Naive thymus-derived CD8-positive, alpha-beta T cell (primary cell): ENCODE measurements at regions of chr1 and their contacts with region 1.

Region 1: DNA sequence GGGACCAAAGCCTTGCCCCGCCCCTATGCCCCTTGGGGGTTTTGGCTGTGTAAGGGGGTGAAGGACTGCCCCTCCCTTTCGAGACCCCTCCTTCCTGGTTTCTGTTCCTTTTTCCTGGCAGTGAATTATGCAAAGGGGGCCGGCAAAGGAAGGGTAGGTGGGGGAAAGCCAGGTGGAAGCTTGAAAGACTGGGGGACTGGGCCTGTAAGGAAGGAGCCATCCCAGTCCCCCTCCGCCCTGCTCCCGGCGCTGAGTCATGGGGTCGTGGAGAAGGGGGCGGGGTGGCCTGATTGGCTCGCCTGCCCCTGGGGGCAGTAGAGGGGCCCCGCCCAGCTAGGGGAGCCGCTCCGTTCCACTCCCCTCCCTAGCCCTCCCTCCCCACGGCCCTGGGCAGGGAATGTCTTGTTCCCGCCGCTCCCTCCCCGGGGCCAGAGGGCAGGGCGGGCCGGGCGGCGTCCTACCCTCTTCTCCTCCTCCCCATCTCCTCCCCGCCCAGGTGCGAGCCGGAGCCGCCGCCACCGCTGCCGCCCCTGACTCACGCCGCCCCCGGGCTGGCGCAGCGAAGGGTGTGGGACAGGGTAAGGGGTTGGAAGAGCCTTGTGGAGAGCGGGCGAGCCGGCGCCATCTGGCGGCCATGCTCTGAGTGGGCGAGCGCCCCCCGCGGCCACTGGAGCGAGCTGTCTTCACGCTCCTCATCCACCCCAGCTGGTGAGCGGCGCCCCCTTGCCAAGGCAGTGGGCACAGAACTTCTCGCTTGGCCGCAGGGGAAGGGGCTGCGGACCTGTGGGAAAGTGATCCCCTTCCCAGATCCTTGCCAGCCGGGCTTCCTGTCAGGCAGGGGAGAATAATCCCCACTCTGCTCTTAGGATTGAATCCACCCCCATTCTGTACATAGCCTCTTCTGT is 14.7 kb downstream of the ZBTB7B start:
- DNase-seq: peak; percentile 78 to 91 (median 86)
- ATAC-seq: peak; percentile 98
- H3K4me3 Mint-ChIP-seq: peak overlapping the region; percentile 52 to 78 (median 69)
- H3K27ac Mint-ChIP-seq: peak overlapping the region in 5 of 10 donors; percentile 29 to 80 (median 67)
- H3K4me1 Mint-ChIP-seq: peaks cover 26 to 56% (median 51%) of the 10 kb centered on the region in 4 donors
- H3K27me3 Mint-ChIP-seq: peaks cover 0 to 17% (median 0%) of the 10 kb centered on the region in 5 donors

Region 2: GRCh38 chr1:154747740-154748404 is 269.4 kb before region 1 on chr1:
- POLR2A ChIA-PET with region 1: no interaction called
- DNase-seq: peak in 8 of 10 donors; percentile 23 to 57 (median 36)
- ATAC-seq: peak; percentile 90 to 96
- H3K4me3 Mint-ChIP-seq: peak overlapping the region; percentile 61 to 85 (median 76)
- H3K27ac Mint-ChIP-seq: peak overlapping the region; percentile 71 to 94 (median 88)
- H3K4me1 Mint-ChIP-seq: peaks cover 33 to 49% (median 45%) of the 10 kb centered on the region in 4 donors
- H3K27me3 Mint-ChIP-seq: no peaks in the 10 kb centered on the region

Region 3: DNA sequence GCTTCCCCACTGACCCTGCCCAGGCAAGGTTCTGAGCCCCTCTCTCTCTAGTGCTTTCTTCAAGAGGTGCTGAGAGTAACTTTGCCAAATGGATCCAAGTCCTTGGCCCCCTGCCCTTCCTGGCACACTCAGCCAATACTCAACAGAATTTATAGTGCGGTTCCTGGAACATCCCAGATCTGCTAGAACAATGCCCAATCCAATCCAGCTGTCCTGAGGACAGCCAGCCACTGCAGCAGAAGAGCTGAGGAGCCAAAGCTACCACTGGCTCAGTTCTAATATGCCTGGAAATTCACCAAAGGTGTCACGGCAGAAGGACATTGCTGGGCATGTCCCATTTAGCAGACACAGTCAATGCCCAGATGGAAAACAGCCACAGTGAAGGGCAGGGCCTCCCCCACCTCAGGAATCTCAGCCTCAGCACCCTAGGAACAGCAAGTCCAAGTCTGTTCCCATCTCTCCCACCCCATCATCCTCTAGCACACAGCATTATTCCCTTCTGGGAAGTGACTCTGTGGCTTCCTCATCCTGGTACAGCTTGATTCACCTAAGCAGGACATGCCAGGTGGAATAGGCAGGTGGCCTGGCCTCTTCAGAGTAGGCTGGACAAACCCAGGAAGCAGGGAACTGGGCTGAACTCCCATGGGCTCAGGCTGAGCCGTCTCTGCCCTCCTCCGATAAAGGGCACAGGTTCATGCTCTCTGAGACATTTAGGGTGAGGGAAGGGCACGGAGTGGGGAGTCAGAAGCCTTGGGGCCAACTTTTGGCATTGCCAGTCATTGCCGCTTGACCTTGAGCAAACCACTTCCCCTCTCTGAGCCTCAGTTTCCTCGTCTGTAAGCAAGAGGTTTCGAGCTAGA is 105.4 kb before region 1 on chr1:
- POLR2A ChIA-PET with region 1: no interaction called
- DNase-seq: no peak
- ATAC-seq: no peak
- H3K4me3 Mint-ChIP-seq: no peak overlapping the region
- H3K27ac Mint-ChIP-seq: peak overlapping the region in 1 of 10 donors; percentile 12
- H3K4me1 Mint-ChIP-seq: peaks cover 0 to 2% (median 0%) of the 10 kb centered on the region in 4 donors
- H3K27me3 Mint-ChIP-seq: peaks cover 0 to 3% (median 1%) of the 10 kb centered on the region in 5 donors

Region 4: GRCh38 chr1:154925335-154926170 is 91.7 kb before region 1 on chr1:
- POLR2A ChIA-PET with region 1: no interaction called
- DNase-seq: no peak
- ATAC-seq: no peak
- H3K4me3 Mint-ChIP-seq: no peak overlapping the region
- H3K27ac Mint-ChIP-seq: peak overlapping the region in 3 of 10 donors; percentile 52 to 88 (median 62)
- H3K4me1 Mint-ChIP-seq: peaks cover 2 to 15% (median 13%) of the 10 kb centered on the region in 4 donors
- H3K27me3 Mint-ChIP-seq: no peaks in the 10 kb centered on the region

Region 5: GRCh38 chr1:154936555-154937084 is 80.7 kb before region 1 on chr1 and contains the start of gene PMVK:
- POLR2A ChIA-PET with region 1: interaction called, 15 read pairs
- DNase-seq: peak in 9 of 10 donors; percentile 84 to 98 (median 95)
- ATAC-seq: peak; percentile 76 to 83
- H3K4me3 Mint-ChIP-seq: peak within 1 kb of the TSS; percentile 86 to 100 (median 98)
- H3K27ac Mint-ChIP-seq: peak within 1 kb of the TSS; percentile 98 to 100 (median 99)
- H3K4me1 Mint-ChIP-seq: peaks cover 20 to 64% (median 53%) of the 10 kb centered on the region in 4 donors
- H3K27me3 Mint-ChIP-seq: no peaks in the 10 kb centered on the region
- polyA plus RNA-seq, gene PMVK: 41.0 to 45.7 (median 45.1) TPM

Region 6: GRCh38 chr1:154955718-154956543 is 61.4 kb before region 1 on chr1 and contains the start of gene PBXIP1:
- POLR2A ChIA-PET with region 1: interaction called, 29 read pairs
- DNase-seq: peak; percentile 49 to 96 (median 88)
- ATAC-seq: peak; percentile 41 to 50
- H3K4me3 Mint-ChIP-seq: peak within 1 kb of the TSS; percentile 95 to 100 (median 98)
- H3K27ac Mint-ChIP-seq: peak within 1 kb of the TSS; percentile 97 to 100 (median 100)
- H3K4me1 Mint-ChIP-seq: peaks cover 39 to 86% (median 67%) of the 10 kb centered on the region in 4 donors
- H3K27me3 Mint-ChIP-seq: no peaks in the 10 kb centered on the region
- polyA plus RNA-seq, gene PBXIP1: 182 to 239 (median 183) TPM

Region 7: DNA sequence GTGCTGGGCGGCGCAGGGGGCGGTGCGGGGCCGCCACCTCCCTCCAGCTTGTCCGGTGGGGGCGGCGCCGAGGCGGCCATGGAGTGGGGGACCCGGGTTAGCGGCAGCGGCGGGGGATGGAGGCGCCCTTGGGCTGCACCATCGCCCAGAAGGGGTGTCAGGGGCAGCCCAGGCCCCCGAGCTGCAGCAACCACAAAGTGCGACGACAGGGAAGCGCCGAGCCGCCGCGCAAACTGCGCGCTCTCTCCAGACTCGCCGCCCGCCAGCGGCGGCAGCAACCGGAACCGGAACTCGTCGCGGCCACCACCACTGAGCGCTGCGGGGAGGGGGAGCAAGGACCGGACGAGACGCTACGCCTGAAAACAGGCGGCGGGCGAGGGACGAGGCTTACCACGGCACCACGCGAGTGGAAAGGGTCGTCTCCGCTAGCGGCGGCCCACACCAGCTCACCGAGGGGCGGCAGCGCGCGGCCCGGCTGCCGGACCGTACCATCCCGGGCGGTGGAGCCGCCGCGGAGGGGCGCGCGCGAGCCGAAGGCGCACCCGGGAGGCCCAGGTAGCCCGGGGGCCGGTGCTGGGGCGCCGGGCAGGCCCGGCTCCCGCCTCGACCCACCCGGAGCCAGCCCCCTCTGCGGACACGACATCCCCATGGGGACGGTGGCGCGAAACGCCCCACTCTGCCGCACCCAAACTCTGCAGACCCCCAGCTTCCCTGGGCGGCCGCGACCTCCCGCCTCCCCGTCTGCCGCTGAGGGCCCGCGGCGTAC is 55.6 kb before region 1 on chr1 and contains the start of gene PYGO2:
- POLR2A ChIA-PET with region 1: interaction called, 29 read pairs
- DNase-seq: peak in 9 of 10 donors; percentile 71 to 93 (median 75)
- ATAC-seq: peak; percentile 77 to 82
- H3K4me3 Mint-ChIP-seq: peak within 1 kb of the TSS; percentile 84 to 98 (median 96)
- H3K27ac Mint-ChIP-seq: peak within 1 kb of the TSS; percentile 92 to 99 (median 97)
- H3K4me1 Mint-ChIP-seq: peaks cover 14 to 53% (median 45%) of the 10 kb centered on the region in 4 donors
- H3K27me3 Mint-ChIP-seq: no peaks in the 10 kb centered on the region
- polyA plus RNA-seq, gene PYGO2: 21.5 to 50.8 (median 35.8) TPM

Region 8: DNA sequence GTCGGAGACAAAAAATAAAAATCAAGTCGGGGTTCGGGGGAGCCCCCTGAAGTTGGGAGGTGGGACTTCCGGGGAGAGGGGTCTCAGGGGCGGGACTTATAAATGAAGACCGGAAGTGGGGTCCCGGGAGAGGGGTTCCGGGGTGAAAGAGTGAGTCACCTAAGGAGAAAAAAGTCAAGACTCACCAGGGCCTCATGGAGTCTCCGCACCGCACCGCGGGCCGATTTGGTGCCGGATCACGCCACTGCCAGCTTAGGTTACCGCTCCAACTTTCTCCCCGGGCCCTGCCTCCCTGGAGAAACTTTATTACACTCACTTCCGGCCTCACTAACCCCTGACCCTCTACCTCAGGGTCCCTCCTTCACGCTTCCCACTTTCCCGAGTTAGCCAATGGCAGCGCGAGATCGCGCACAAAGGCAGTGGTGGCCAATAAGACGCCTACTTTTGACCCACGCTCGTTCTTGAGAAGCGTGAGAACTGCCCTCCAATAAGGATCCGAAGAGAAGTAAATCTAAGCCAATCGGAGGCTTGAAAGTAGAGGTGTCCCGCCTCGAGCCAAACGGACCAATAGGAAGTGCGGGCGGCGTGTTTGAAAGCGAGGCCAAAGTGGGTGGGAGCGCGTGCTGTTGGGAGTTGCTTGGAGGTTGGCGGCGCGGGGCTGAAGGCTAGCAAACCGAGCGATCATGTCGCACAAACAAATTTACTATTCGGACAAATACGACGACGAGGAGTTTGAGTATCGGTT is 43.1 kb before region 1 on chr1 and contains the start of gene CKS1B:
- POLR2A ChIA-PET with region 1: interaction called, 23 read pairs
- DNase-seq: peak; percentile 86 to 99 (median 98)
- ATAC-seq: peak; percentile 88 to 90
- H3K4me3 Mint-ChIP-seq: no peak within 1 kb of the TSS
- H3K27ac Mint-ChIP-seq: no peak within 1 kb of the TSS
- H3K4me1 Mint-ChIP-seq: peaks cover 16 to 33% (median 30%) of the 10 kb centered on the region in 4 donors
- H3K27me3 Mint-ChIP-seq: no peaks in the 10 kb centered on the region
- polyA plus RNA-seq, gene CKS1B: 58.0 to 66.6 (median 63.0) TPM

Region 9: GRCh38 chr1:154982897-154983648 is 34.2 kb before region 1 on chr1 and contains the start of gene FLAD1:
- POLR2A ChIA-PET with region 1: interaction called, 20 read pairs
- DNase-seq: peak; percentile 84 to 98 (median 94)
- ATAC-seq: peak; percentile 99 to 100
- H3K4me3 Mint-ChIP-seq: no peak within 1 kb of the TSS
- H3K27ac Mint-ChIP-seq: peak within 1 kb of the TSS in 1 of 10 donors; percentile 63
- H3K4me1 Mint-ChIP-seq: peaks cover 0 to 21% (median 2%) of the 10 kb centered on the region in 4 donors
- H3K27me3 Mint-ChIP-seq: no peaks in the 10 kb centered on the region
- polyA plus RNA-seq, gene FLAD1: 30.9 to 41.8 (median 31.9) TPM

Region 10: GRCh38 chr1:155001675-155002463 is 15.4 kb before region 1 on chr1:
- POLR2A ChIA-PET with region 1: interaction called, 20 read pairs
- DNase-seq: peak; percentile 89 to 98 (median 92)
- ATAC-seq: peak; percentile 71 to 80
- H3K4me3 Mint-ChIP-seq: peak overlapping the region; percentile 82 to 94 (median 90)
- H3K27ac Mint-ChIP-seq: peak overlapping the region; percentile 66 to 92 (median 87)
- H3K4me1 Mint-ChIP-seq: peaks cover 34 to 80% (median 57%) of the 10 kb centered on the region in 4 donors
- H3K27me3 Mint-ChIP-seq: peaks cover 0 to 6% (median 0%) of the 10 kb centered on the region in 5 donors